Activated T-helper 1 cell treated with anti-CD3 and anti-CD28 coated beads, Interleukin-12 subunit alpha, Interleukin-12 subunit beta, Interleukin-2, Interleukin-4 antibody, amounts not matched to agents 30 ng/mL and 10 ng/mL and 1 ng/mL, durations not matched to agents 14 hours and 24 hours and 36 hours (primary cell): ENCODE measurements at regions of chr16 and their contacts with region 1.

Region 1: DNA sequence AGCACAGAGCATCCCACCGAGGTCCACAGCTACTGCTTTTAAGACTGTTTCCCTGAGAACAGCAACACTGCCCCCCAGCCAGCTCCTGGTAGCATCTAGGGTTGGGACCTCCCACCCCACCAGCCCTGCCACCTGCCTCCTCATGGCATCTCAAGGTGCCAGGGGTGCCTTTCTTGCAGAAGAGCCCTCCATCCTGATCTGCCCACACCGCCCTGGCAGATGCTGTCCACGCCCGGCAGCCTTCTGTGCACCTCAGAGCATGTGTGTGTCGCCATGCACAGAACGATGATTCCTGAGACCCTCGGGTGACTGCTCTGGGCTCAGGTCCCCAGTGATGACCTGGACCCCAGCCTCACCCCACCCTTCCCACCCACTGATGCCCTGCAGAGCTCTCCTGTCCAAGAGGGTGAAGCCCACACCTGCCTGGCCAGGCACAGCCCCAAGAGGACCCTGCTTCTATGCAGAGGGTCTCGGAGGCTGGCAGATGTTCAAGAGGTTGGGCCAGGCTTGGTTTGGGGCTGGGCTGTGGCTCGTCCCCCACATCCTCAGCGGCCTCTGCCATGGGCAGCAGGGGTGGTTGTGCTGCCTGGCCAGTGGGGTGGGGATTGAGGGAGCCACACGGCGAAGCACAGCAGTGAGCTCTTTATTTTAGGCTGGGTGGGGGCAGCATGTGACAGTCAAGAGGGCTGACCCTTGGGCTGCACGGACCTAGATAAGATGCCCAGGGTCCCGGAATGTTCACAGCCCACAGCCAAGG is 5.2 kb upstream of the SPATA2L start:
- DNase-seq: no peak
- H3K4me3 Mint-ChIP-seq: no peak overlapping the region
- H3K27ac Mint-ChIP-seq: no peak overlapping the region
- H3K4me1 Mint-ChIP-seq: peaks cover 13% of the 10 kb centered on the region
- H3K27me3 Mint-ChIP-seq: no peaks in the 10 kb centered on the region

Region 2: GRCh38 chr16:88993166-88993761 is 713.4 kb before region 1 on chr16:
- intact Hi-C with region 1: no loop called
- DNase-seq: no peak
- H3K4me3 Mint-ChIP-seq: no peak overlapping the region
- H3K27ac Mint-ChIP-seq: no peak overlapping the region
- H3K4me1 Mint-ChIP-seq: no peaks in the 10 kb centered on the region
- H3K27me3 Mint-ChIP-seq: peaks cover 3% of the 10 kb centered on the region

Region 3: GRCh38 chr16:89793955-89794354 is 87.3 kb after region 1 on chr16:
- intact Hi-C with region 1: loop called (anchors 1 kb)
- DNase-seq: no peak
- H3K4me3 Mint-ChIP-seq: no peak overlapping the region
- H3K27ac Mint-ChIP-seq: no peak overlapping the region
- H3K4me1 Mint-ChIP-seq: no peaks in the 10 kb centered on the region
- H3K27me3 Mint-ChIP-seq: no peaks in the 10 kb centered on the region

Region 4: DNA sequence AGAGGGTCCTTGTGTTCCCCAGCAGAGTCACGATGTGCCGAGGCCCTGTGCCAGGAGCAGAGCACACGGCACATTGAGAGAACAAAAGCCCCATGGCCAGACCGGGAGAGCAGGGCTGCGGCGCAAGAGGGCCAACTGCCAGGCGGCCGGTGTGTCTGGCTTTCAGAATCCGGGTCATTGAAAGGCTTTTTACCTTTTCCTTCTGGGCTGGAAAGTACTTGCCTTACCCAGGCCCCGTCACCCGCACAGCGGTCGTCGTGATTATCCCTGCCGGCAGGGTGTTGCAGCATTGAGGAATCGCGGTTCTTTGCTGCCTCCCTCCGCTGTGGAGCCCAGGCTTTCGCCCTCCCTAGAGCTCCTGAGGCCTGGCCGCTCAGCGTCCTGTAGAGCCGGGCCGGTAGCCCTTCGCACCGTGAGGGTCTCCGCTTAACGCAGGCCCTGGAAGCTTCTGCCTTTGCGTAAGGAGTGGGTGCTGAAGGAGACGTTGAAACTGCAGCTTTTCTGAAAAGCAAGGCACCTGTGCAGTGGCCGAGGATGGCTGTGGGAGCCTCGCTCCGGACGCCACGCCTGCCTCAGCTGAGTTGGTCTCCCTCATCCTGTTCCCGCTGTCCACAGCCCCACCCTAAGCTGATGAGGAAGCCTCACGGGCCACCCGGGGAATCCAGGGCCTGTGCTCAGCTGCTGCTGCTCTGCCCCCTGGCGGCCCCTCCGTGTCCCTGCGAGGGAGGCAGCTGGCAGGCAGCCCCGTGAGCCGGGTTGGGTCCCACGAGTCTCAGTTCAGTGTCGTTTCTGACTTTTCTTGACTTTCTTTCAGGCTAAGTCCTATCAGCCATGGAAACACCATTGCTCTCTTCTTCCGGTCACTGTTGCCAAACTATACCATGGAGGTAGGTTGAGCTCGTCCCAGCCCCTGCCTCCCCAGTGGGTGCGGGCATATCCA is 203.4 kb after region 1 on chr16:
- intact Hi-C with region 1: loop called (anchors 2 kb)
- DNase-seq: peak; percentile 52
- H3K4me3 Mint-ChIP-seq: no peak overlapping the region
- H3K27ac Mint-ChIP-seq: no peak overlapping the region
- H3K4me1 Mint-ChIP-seq: no peaks in the 10 kb centered on the region
- H3K27me3 Mint-ChIP-seq: no peaks in the 10 kb centered on the region